PC-9 (cell line): ENCODE measurements at regions of chr1 and their contacts with region 1.

Region 1: DNA sequence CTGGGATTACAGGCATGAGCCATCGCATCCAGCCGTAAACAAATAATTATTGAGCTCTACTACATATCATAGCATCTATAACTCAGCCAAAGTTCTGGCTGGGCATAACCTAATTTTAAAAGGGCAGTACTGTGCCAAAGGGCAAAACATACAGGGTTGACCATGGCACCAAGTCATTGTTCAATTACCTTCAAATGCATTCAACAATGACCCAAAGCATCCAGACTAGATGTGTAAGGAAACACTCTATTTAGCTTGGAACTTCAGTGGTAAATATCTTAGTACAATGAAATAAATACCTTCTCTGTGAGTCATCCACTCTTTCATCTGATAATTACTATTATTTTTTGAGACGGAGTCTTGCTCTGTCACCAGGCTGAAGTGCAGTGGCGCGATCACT is 70.0 kb downstream of the NVL start:
- DNase-seq: peak in 1 of 2 experiments; percentile 45
- H3K4me3 ChIP-seq: no peak overlapping the region
- H3K27ac ChIP-seq: no peak overlapping the region
- H3K4me1 ChIP-seq: peaks cover 7% of the 10 kb centered on the region; the same call in 1 of the 2 replicates
- H3K27me3 ChIP-seq: no peaks in the 10 kb centered on the region
- CTCF ChIP-seq: no peak

Region 2: GRCh38 chr1:224203243-224204016 is 56.5 kb before region 1 on chr1:
- CTCF ChIA-PET with region 1: interaction called, 7 read pairs
- POLR2A ChIA-PET with region 1: interaction called, 21 read pairs
- intact Hi-C with region 1: no loop called
- DNase-seq: peak; percentile 57 to 60
- H3K4me3 ChIP-seq: no peak overlapping the region
- H3K27ac ChIP-seq: peak overlapping the region; percentile 17
- H3K4me1 ChIP-seq: peaks cover 40% of the 10 kb centered on the region
- H3K27me3 ChIP-seq: no peaks in the 10 kb centered on the region
- CTCF ChIP-seq: no peak

Region 3: DNA sequence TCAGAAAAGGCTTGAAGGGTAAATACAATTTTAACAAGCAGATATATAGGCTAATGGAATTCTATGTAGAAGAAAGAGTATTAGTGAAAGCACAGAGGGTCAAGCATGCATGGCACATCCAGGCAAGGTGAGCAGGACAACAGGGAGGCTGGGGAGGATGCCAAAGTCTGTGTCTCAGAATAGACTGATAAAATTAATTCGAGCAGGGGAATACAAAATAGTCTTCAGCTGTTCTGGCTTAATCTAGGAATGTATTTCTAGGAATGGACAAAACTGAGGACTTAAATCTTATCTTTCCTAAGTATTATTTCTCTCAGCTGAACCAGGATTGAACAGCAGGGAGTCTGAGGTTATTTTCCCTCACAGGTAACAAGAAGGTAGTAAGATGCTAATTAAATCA is 34.8 kb after region 1 on chr1:
- CTCF ChIA-PET with region 1: no interaction called
- POLR2A ChIA-PET with region 1: interaction called, 11 read pairs
- intact Hi-C with region 1: no loop called
- DNase-seq: no peak
- H3K4me3 ChIP-seq: no peak overlapping the region
- H3K27ac ChIP-seq: no peak overlapping the region
- H3K4me1 ChIP-seq: no peaks in the 10 kb centered on the region
- H3K27me3 ChIP-seq: no peaks in the 10 kb centered on the region
- CTCF ChIP-seq: no peak

Region 4: DNA sequence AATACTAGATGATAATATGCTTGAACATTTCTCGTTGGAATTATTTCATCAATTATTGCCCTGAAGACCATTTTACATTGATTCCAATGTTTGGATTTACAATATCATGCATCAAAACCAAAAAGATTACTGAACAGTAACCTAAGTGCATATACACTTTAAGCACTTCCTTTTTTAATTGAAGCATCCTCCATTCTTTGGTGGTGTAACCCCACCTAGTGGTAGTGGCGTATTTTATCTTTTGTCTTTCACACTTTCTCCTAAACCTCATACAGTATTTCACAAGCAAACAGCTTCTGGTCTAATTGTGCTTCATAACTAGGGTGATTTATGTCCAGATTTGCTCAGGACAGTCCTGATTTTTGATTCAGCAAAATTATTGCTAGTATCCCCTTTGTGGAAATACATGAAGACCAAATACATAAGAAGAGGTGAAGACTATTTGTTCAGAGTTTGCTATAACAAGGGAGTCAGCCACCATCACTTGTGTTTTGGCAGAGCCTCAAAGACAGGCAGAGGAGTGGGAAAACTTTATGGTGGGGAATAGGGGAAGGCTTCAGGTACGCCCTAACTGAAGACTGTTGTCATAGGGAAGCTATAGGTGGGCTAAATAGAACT is 73.5 kb after region 1 on chr1:
- CTCF ChIA-PET with region 1: no interaction called
- POLR2A ChIA-PET with region 1: no interaction called
- intact Hi-C with region 1: no loop called
- DNase-seq: peak; percentile 26 to 64
- H3K4me3 ChIP-seq: no peak overlapping the region
- H3K27ac ChIP-seq: no peak overlapping the region
- H3K4me1 ChIP-seq: peaks cover 13% of the 10 kb centered on the region
- H3K27me3 ChIP-seq: no peaks in the 10 kb centered on the region
- CTCF ChIP-seq: peak; percentile 77